HEK293T (cell line): ENCODE measurements at regions of chr11 and their contacts with region 1.

Region 1: GRCh38 chr11:65711785-65712632 is at the start of gene KAT5:
- DNase-seq: peak; percentile 91

Region 2: DNA sequence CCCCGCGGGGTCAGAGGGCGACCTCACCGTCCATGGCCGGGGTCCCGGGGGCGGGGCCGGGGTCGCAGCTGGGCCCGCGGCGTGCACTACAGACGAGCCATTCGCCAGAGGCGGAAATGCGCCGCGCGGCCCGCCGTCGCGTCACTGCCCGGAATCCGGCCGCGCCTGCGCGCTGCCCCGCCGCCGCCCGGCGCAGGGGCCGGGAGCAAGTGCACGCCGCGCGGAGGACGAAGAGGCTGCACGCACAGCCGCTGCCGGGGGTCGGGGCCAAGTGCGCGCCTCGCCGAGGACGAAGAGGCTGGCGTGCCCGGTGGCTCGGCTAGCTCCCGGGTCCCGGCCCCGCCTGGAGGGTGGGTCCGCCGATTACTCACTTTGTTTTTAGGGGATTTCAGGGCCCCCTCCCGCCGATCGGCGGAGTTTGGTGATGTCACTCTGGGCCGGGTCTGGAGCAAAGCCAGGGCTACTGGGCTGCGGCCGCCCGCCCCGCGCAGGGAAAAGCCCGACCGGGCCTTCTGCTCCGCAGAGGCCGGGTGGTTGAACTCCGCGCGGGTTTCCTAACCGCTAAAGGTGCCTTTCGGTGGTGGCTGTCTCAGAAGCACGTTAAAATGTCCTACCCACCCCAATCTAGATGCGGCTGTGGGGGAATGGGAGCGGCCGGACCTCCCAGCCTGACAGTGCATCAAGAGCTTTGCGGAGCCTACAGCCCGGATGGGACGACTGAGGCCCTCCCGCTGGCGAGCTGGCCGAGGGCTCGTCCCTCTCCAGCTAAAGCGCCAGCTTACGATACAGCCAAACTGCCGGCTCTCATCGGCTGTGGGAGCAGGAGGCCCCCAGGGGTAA is 49.0 kb before region 1 on chr11 and contains the start of gene RELA:
- CTCF ChIA-PET with region 1: interaction called, 7 read pairs
- POLR2A ChIA-PET with region 1: interaction called, 11 read pairs
- DNase-seq: peak; percentile 96

Region 3: DNA sequence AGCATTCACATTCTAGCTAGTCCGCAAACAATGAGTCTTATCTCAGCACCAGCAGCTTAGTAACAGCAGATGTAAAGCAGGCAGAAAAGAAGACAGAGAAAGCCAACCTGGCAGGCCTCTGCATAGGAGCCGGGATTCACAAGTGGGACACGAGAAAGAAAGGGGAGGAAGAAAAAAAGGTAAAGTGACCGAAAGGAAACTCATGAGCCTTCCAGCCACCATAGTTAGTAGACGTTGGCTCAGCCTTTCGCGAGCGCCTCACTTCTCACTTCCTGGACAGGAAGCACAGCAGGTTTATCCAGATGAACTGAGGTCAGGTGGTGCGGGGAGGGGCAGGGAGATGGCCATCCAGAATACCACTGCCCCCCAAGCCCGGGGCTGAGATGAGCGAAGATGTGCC is 19.6 kb before region 1 on chr11:
- CTCF ChIA-PET with region 1: interaction called, 10 read pairs
- POLR2A ChIA-PET with region 1: interaction called, 5 read pairs
- DNase-seq: no peak

Region 4: DNA sequence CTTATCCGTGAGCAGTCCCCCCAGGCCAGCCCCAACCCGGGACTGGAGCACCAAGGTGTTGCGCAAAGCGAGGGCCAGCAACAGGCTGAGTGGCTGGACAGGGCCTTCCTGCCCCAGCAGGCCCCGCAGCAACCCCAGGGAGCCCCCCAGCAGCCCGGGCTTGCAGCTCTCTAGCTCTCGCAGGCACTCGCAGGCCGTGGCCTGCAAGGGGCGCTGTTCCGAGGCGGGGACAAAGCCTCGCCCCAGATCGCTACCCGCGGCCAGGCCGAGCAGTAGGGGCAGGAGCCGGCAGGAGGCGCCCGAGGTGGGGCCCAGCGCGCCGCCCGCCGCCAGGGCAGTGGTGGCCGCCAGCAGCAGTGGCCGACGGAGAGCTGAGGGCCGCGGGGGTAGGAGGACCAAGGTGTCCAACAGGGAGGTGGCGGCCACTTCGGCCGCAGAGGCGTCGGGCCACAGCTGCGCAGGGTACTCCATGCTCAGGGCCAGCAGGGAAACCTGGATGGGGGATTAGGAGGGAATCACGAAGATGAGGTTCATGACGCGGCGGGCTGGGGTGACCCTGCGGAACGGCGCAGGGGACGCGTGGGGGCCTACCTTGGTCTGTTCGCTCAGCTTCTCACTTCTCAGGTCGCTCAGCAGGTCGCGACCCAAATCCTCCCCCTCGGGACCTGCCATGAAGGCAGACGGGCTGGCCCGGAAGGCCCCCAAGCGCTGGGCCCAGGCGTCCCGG is 68.0 kb after region 1 on chr11:
- CTCF ChIA-PET with region 1: interaction called, 17 read pairs
- POLR2A ChIA-PET with region 1: interaction called, 14 read pairs
- DNase-seq: peak; percentile 89

Region 5: DNA sequence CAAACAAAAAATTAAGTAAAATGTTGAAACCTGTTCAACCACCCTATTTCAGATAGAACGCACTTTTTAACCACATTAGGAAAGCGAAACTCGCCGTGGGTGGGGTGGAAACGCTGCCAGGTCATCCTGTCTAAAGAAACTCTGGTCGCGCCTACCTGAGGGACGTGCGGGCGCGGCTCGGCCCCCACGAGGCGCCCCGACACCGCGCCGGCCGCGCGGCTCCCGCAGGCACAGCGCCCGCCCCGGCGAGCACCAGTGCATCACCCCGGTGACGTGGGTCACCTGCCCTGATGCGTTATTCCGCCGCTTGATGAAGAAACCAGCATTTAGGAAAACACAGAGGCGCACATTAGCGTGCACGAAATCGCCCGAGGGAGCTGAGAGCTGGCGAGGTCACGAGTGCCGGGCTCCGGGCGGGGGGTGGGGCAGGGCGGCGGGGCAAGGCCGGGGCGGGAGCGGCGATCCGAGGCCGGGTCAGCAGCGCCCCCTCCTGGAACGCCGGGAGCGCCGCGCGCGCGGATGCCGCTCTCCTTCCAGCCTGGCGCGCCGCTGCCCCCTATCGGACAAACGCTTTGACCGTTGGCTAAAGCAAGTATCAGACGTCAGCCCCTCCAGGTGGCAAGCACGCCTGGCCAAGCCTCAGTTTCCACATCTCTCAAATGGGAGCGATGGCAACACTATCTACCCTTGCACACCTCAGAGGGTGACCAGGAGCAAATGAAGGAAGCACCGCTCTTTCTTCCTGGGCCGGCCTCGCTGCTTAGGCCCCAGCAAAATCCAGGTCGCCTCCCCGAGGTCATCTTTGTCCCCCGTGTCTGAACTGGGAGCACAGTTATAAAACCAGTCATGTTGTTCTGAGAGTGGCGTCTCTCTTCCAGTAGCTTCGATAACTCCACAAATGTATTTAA is 106.1 kb after region 1 on chr11:
- CTCF ChIA-PET with region 1: interaction called, 8 read pairs
- POLR2A ChIA-PET with region 1: interaction called, 27 read pairs
- DNase-seq: peak; percentile 96

Region 6: DNA sequence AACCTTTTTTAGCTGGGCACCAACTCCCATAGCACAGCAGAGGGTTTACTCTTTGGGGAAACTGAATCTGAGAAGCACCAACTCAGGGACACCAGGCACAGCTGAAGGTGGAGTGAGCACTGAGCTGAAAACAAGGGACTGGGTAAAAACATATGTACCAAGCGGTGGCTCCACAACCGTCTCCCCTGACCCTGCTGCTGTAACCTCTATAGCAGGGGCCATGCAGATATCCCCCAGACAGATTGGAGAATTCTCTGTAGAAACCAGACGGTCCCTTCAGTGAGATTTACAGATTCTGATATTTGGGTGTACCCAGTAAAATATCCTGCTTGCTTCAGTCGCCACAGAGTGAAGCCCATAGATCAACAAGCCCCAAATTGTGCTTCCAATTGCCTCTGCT is 117.5 kb after region 1 on chr11:
- CTCF ChIA-PET with region 1: interaction called, 12 read pairs
- POLR2A ChIA-PET with region 1: interaction called, 4 read pairs
- DNase-seq: no peak

Region 7: DNA sequence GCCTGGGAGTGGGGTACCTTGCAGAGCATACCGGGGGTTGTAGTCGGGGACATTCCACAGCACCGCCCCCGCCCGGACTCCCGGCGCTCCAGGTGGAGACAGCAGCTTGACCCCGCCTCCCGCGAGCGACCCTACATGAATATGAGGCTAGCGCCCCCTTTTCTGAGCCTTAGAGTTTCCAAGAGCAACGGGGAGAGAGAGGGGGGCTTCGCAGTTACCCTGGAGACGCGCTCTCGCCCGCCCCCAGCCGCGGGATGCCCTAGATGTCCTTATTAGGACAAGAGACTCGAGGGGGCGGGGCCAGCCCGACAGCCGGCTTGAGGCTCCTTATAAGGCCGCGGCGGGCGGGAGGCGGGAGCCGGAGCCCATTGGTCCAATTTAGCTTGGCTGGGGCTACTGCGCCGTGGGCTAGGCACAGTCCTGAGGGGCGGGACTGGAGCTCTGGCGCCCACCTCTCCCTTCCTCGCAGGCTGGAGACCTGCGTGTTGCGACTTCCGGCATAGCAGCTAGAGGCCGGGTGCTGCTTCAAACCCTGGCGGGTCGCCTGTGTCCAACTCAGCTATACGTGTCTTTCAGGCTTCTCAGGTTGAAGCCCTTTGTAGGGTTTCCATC is 147.3 kb after region 1 on chr11:
- CTCF ChIA-PET with region 1: interaction called, 6 read pairs
- POLR2A ChIA-PET with region 1: interaction called, 17 read pairs
- DNase-seq: peak; percentile 87

Region 8: GRCh38 chr11:66311965-66312548 is 600.0 kb after region 1 on chr11:
- CTCF ChIA-PET with region 1: no interaction called
- POLR2A ChIA-PET with region 1: no interaction called
- DNase-seq: peak; percentile 94